Activated naive CD8-positive, alpha-beta T cell treated with anti-CD3 and anti-CD28 coated beads, Interleukin-2, amount 10 ng/mL, durations not matched to agents 7 days and 5 days (primary cell): ENCODE measurements at regions of chr12 and their contacts with region 1.

Region 1: DNA sequence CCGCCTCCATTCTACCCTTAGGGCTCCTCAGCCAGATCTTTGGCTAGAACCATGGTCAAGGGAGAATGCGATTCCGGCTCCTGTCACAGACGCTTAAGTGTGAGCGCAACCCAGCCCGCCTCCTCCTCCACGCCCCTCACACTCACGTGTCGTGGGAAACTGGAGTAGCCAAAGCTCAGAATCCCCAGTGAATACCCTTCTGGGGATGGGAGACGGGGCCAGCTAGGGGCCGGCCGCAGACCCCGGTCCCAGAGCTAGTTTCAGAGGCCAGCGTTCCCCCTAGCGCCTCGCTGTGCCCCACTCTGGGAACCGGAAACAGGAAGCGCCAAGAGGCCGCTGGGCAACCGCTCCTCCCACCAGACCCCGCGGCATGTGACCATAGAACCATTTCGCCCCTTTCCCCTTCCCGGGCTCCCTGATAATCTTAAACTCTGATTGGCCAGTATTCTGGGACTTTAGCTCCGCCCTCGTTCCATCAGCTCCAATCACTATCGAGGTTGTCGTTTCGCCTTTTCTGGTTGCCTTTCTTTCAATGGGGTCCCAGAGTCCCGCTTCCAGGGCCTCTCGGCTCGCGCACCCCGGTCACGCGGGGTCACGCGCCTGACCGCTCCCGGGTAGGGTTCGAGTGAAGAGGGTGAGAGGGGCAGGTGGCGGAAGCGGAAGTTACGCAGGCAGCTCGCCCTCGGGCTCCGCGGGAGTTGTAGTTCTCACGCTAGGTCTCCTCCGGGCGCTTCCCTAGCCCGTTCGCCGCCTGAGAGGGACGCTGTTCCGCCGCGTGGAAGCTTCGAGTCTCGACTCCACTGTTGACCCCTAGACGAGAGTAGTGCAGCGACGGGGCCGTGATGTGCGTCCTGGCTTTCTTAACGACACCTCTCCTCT is at the start of gene M6PR:
- DNase-seq: peak; percentile 92
- ATAC-seq: peak; percentile 85
- H3K4me3 Mint-ChIP-seq: peak within 1 kb of the TSS; percentile 93
- H3K27ac Mint-ChIP-seq: peak within 1 kb of the TSS; percentile 91
- H3K4me1 Mint-ChIP-seq: peaks cover 48% of the 10 kb centered on the region
- H3K27me3 Mint-ChIP-seq: no peaks in the 10 kb centered on the region
- total RNA-seq, gene M6PR: 183 to 192 TPM

Region 2: GRCh38 chr12:8156845-8157244 is 792.7 kb before region 1 on chr12 and contains the start of gene ZNF705A:
- POLR2A ChIA-PET with region 1: no interaction called
- DNase-seq: no peak
- ATAC-seq: no peak
- H3K4me3 Mint-ChIP-seq: no peak within 1 kb of the TSS
- H3K27ac Mint-ChIP-seq: no peak within 1 kb of the TSS
- H3K4me1 Mint-ChIP-seq: peaks cover 18% of the 10 kb centered on the region
- H3K27me3 Mint-ChIP-seq: peaks cover 51% of the 10 kb centered on the region
- total RNA-seq, gene ZNF705A: not detected

Region 3: DNA sequence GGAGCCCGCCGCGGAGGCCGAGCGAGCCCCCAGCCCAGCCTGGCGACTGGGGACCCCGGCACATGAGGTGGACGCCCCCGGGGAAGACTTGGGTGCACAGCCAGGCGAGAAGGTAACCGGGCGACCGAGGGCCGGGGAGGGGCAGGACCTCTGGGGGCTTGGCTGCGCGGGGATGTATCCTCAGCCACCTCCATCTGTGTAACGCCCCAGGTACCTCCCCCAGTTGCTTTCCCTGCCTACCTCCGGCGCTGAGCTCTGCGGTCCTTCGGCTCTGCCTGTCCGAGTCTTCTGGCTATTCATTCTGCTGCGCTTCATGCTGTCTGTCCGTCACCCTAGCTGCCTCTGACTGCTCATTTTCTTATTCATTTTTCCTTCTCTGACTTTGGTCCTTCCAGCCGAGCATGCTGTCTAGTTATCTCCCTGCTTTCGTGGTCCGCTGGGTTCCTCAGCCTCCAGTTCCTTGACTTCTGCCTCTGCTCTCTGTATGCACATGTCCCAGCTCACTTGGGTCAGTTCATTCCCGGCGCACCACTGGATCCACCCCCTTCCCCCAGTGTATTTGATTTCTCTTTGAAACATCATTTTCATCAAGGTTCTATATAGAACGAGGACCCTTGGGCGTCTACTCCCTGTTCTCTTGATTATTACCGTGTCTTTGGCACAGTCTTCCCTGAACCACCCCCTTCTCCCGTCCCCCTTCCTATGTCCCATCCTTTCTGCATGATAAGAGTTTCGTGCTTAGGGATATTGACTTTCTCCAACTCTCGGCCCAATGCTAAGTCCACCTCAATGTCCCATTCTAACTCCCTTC is 34.7 kb before region 1 on chr12:
- POLR2A ChIA-PET with region 1: interaction called, 17 read pairs
- DNase-seq: peak; percentile 70
- ATAC-seq: peak; percentile 90
- H3K4me3 Mint-ChIP-seq: no peak overlapping the region
- H3K27ac Mint-ChIP-seq: no peak overlapping the region
- H3K4me1 Mint-ChIP-seq: peaks cover 8% of the 10 kb centered on the region
- H3K27me3 Mint-ChIP-seq: peaks cover 7% of the 10 kb centered on the region

Region 4: DNA sequence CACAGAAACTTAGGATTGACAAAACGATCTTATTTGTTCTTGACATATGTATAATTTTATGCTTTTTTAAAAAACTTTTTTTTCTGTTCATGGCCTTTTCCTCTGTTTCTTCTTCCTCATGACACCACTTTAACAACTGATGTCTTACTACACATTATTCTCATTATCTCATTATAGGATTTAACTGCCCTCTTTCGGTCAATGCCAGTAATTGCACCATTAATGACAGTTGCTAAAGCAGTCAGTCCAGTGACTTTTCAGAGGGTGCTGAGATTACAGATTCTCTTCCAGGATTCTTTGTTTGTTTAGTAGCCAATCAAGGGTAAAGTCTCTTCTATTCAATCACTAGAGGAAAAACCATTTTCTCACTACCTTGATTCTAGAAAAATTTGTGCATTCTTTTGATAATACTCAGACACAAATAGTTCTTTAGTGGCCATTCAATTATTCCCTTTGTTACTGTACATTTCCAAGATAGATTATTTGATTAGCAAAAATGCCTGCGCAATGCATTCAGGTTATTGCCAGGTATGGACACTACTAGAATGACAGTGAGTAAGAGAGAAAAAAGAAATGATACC is 89.9 kb after region 1 on chr12:
- POLR2A ChIA-PET with region 1: interaction called, 11 read pairs
- DNase-seq: no peak
- ATAC-seq: peak; percentile 63
- H3K4me3 Mint-ChIP-seq: no peak overlapping the region
- H3K27ac Mint-ChIP-seq: no peak overlapping the region
- H3K4me1 Mint-ChIP-seq: peaks cover 10% of the 10 kb centered on the region
- H3K27me3 Mint-ChIP-seq: peaks cover 2% of the 10 kb centered on the region

Region 5: DNA sequence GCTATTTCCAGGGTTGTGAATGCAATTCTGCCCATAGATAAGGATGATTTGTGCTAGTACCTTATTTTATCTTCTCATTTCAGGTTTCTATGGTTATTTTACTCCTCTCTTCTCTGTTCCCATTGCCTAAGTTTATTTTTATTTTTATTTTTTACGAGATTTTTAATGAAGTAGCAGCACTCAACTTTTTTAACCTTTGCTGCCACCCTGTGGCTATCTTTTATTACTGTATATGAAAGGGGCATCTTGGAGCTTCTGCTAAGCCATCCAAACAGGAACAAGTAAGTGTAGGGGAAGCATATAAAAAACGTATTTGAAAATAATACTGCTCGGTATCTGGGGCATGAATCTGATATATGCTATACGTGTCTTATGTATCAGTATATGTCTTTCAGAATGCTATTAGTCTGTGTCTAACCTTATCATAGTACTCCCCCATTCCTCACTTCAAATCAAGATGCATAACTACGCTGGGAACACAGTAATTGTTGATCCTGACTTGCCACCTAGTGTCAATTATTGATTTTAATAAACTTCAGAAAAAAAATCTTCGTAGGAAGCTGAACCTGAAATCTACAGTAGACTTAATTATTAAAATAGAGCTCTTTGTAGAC is 100.0 kb after region 1 on chr12:
- POLR2A ChIA-PET with region 1: interaction called, 15 read pairs
- DNase-seq: no peak
- ATAC-seq: peak; percentile 60
- H3K4me3 Mint-ChIP-seq: no peak overlapping the region
- H3K27ac Mint-ChIP-seq: no peak overlapping the region
- H3K4me1 Mint-ChIP-seq: peaks cover 2% of the 10 kb centered on the region
- H3K27me3 Mint-ChIP-seq: no peaks in the 10 kb centered on the region